Right ventricle myocardium superior (tissue), 1 donor: ENCODE measurements at regions of chr5 and their contacts with region 1.

Region 1: DNA sequence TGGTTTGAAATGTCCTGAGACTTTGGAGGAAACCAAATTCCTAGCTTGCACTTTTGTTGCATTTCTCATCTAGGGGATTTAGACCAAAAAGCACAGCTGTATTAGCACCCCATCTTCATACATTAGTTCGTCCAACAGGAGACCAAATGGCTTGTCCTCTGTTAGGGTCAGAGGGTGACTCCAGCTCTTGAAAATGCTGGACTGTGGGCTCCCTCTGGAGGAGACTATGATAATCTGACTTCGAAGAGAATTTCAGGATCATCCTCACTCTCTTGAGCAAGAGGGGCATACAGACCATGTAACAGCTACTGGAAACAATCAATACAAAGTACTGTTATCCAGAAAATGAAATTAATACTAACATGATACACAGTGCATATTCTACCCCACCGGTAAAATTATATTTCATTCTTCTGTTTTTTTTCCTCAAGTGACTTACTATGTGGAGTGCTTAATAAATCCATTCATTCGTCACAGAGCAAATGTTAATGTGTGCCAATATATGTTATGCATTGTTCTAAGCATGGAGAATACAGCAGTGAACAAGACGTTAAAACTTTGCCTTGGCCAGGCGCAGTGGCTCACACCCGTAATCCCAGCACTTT is 63.7 kb upstream of the PPP2CA start:
- DNase-seq: no peak
- ATAC-seq: peak; percentile 95

Region 2: DNA sequence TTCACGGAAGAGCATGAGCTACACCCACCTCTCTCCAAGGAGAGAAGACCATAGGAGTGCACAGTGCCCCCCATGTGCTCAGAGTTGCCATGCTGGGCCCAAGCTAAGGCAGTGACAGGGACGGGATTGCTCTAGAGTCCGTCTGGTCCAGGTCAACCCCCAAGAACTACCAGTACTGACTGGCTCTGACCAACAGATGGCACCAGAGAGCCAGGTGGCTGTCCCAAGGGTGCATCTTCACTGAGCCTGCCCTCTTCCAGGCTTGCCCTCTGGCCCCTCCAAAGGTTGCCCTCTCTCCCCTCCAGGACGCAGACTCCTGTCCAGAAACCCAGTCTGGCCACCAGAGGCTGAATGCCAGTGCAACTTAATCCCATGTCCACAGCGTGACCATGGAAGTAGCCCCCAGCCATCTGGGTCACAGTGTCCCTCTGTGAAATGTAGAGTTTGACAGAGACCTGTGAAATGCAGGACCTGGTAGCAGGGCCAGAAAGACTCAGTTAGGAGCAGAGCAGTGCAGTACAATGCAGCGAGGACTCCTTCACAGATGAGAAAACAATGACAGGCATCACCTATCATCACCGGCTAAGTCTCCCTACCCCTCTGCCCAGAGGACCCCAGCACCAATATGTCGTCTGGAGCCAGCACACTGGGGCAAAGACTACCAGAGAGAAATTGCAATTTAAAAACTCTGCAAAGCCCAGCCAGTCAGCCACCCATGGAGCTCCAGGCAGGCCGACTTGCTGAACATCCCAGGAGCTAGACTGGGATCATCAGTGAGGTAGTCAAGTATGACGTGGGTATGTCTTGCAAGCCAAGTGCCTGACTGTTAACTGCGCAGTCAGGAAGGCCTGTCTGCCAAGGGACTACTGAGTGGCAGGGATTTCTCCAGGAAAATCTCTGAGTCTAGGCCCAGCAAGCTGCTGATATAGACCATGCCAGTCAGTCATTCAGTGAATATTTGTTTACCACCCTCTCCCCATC is 105.2 kb before region 1 on chr5:
- intact Hi-C with region 1: loop called (anchors 1 kb)
- DNase-seq: peak; percentile 68
- ATAC-seq: peak; percentile 92

Region 3: GRCh38 chr5:134328619-134329018 is 39.0 kb after region 1 on chr5:
- intact Hi-C with region 1: no loop called
- DNase-seq: no peak
- ATAC-seq: no peak

Region 4: DNA sequence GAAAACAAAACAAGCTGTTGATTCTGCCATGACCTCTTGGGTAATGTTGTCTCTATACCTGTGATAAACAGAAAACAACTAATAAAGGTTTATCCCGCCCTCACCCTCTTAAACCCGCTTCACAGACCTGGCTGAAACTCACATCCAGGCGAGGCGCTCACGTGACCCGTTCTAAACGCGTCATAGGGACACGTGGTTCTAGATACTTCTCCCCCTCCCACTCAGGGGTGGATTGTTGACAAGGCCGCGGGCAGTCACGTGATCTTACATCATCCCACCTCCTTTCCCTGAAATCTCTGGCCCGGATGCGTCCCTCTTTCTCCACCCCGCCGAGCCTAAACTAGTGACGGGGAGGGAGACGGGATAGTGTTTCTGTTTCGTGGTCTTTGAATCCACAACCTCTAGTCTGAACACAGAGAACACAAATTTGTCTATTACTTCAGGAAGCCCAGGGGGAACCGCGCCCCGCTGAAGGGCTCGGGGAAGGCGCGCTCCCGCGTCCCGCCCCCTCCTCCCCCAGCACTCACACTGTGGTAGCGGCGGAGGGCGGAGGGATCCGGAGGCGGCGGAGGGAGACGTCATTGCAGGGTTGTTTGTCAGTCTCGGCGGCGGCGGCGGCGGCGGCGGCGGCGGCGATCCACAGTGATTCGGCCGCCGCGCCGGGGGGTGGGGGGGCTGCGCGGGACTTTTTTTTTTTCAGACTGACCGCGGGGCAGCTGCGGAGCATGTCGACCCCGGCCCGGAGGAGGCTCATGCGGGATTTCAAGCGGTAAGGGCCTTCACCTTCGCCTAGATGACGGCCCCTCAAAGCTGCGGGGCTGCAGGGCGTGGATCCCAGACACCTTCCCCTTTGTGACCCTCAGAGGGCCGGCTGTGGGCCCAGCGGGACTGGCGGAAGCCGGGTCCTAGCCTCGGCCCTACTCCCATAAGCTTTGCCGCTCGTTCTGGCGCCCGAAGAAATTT is 81.5 kb after region 1 on chr5 and contains the start of gene UBE2B:
- intact Hi-C with region 1: no loop called
- DNase-seq: peak; percentile 99
- ATAC-seq: peak; percentile 95
- total RNA-seq, gene UBE2B: 236 TPM

Region 5: GRCh38 chr5:134738133-134738962 is 448.7 kb after region 1 on chr5 and contains the start of gene CAMLG:
- intact Hi-C with region 1: no loop called
- DNase-seq: peak; percentile 99
- ATAC-seq: peak; percentile 99
- total RNA-seq, gene CAMLG: 17.1 TPM